ENCODE measurements at regions of chr12 and their contacts with region 1.

Region 1: GRCh38 chr12:131311764-131312163 is 358.1 kb downstream of the ADGRD1 start:
- DNase-seq: no peak
- H3K4me3 ChIP-seq: no peak overlapping the region
- H3K27ac ChIP-seq: no peak overlapping the region
- H3K4me1 ChIP-seq: no peaks in the 10 kb centered on the region
- H3K27me3 ChIP-seq: no peaks in the 10 kb centered on the region
- CTCF ChIP-seq: no peak

Region 2: DNA sequence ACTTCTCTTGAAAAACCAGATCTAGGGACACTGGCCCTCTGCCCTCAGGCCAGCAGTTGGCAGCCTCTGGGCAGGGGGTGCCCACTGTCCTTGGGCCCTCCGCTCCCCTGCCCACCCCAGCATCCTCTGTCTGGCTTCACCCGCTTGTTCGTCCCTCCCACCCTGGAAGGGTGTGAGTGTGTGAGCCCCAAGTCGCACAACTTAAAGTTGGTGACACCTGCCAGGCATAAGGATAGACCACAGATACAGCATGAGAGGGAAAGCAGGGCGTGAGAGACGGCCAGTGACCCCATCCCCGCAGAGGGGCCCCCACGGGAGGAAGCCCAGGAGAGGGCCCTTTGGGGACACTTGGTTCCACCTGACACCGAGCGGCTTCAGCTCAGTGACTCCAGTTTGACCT is 572.2 kb before region 1 on chr12:
- intact Hi-C with region 1: no loop called
- DNase-seq: no peak
- H3K4me3 ChIP-seq: no peak overlapping the region
- H3K27ac ChIP-seq: no peak overlapping the region
- H3K4me1 ChIP-seq: no peaks in the 10 kb centered on the region
- H3K27me3 ChIP-seq: no peaks in the 10 kb centered on the region
- CTCF ChIP-seq: no peak

Region 3: GRCh38 chr12:131642101-131642540 is 330.4 kb after region 1 on chr12:
- intact Hi-C with region 1: loop called (anchors 5 kb)
- DNase-seq: no peak
- H3K4me3 ChIP-seq: no peak overlapping the region
- H3K27ac ChIP-seq: no peak overlapping the region
- H3K4me1 ChIP-seq: no peaks in the 10 kb centered on the region
- H3K27me3 ChIP-seq: no peaks in the 10 kb centered on the region
- CTCF ChIP-seq: no peak